Activated B cell treated with CpG ODN at 0.5 μM for 24 hours (primary cell): ENCODE measurements at regions of chr1 and their contacts with region 1.

Region 1: GRCh38 chr1:243325305-243325890 is 69.6 kb downstream of the SDCCAG8 start:
- DNase-seq: no peak
- ATAC-seq: peak; percentile 40
- H3K4me3 Mint-ChIP-seq: no peak overlapping the region
- H3K27ac Mint-ChIP-seq: no peak overlapping the region
- H3K4me1 Mint-ChIP-seq: no peaks in the 10 kb centered on the region
- H3K27me3 Mint-ChIP-seq: no peaks in the 10 kb centered on the region
- CTCF ChIP-seq: peak; percentile 84

Region 2: DNA sequence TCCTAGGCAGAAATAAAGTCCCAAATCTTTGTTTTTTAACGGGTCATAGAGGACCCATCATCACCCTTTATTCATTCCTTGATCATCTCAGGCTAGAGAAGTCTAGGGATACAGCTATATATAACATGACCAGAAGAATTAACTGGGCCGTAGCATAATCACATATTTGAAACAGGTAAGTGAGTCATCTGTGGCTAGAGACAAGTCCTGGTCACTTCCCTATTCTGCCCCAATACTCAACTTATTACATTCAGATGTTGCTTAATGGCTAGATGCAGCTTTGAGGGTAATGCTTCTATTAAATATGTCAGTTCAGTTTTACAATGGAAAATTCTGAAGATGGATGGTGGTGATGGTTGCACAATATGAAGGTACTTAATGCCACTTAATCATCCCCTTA is 1430.4 kb before region 1 on chr1:
- CTCF ChIA-PET with region 1: no interaction called
- POLR2A ChIA-PET with region 1: no interaction called
- intact Hi-C with region 1: loop called (anchors 5 kb)
- DNase-seq: no peak
- ATAC-seq: no peak
- H3K4me3 Mint-ChIP-seq: no peak overlapping the region
- H3K27ac Mint-ChIP-seq: no peak overlapping the region
- H3K4me1 Mint-ChIP-seq: peaks cover 15% of the 10 kb centered on the region
- H3K27me3 Mint-ChIP-seq: no peaks in the 10 kb centered on the region
- CTCF ChIP-seq: no peak

Region 3: GRCh38 chr1:242017584-242018233 is 1307.7 kb before region 1 on chr1:
- CTCF ChIA-PET with region 1: no interaction called
- POLR2A ChIA-PET with region 1: no interaction called
- intact Hi-C with region 1: loop called (anchors 10 kb)
- DNase-seq: no peak
- ATAC-seq: peak; percentile 77
- H3K4me3 Mint-ChIP-seq: no peak overlapping the region
- H3K27ac Mint-ChIP-seq: no peak overlapping the region
- H3K4me1 Mint-ChIP-seq: no peaks in the 10 kb centered on the region
- H3K27me3 Mint-ChIP-seq: no peaks in the 10 kb centered on the region
- CTCF ChIP-seq: no peak

Region 4: GRCh38 chr1:242454262-242455045 is 870.9 kb before region 1 on chr1:
- CTCF ChIA-PET with region 1: interaction called, 7 read pairs
- POLR2A ChIA-PET with region 1: no interaction called
- intact Hi-C with region 1: loop called (anchors 1 kb)
- DNase-seq: no peak
- ATAC-seq: no peak
- H3K4me3 Mint-ChIP-seq: no peak overlapping the region
- H3K27ac Mint-ChIP-seq: no peak overlapping the region
- H3K4me1 Mint-ChIP-seq: peaks cover 2% of the 10 kb centered on the region
- H3K27me3 Mint-ChIP-seq: peaks cover 10% of the 10 kb centered on the region
- CTCF ChIP-seq: no peak

Region 5: DNA sequence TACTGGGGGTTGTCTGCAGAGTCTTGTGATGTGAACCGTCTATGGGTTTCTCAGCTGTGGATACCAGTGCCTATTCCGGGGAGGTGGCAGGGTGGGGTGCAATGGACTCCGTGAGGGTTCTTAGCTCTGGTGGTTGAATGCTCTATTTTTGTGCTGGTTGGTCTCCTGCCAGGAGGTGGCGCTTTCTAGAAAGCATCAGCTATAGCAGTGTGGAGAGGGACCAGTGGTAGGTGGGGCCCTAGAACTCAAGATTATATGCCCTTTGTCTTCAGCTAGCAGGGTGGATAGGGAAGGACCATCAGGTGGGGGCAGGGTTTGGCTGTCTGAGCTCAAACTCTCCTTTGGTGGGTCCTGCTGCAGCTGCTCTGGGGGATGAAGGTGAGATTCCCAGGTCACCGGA is 673.6 kb before region 1 on chr1:
- CTCF ChIA-PET with region 1: no interaction called
- POLR2A ChIA-PET with region 1: no interaction called
- intact Hi-C with region 1: loop called (anchors 2 kb)
- DNase-seq: no peak
- ATAC-seq: no peak
- H3K4me3 Mint-ChIP-seq: no peak overlapping the region
- H3K27ac Mint-ChIP-seq: no peak overlapping the region
- H3K4me1 Mint-ChIP-seq: no peaks in the 10 kb centered on the region
- H3K27me3 Mint-ChIP-seq: peaks cover 4% of the 10 kb centered on the region
- CTCF ChIP-seq: no peak

Region 6: DNA sequence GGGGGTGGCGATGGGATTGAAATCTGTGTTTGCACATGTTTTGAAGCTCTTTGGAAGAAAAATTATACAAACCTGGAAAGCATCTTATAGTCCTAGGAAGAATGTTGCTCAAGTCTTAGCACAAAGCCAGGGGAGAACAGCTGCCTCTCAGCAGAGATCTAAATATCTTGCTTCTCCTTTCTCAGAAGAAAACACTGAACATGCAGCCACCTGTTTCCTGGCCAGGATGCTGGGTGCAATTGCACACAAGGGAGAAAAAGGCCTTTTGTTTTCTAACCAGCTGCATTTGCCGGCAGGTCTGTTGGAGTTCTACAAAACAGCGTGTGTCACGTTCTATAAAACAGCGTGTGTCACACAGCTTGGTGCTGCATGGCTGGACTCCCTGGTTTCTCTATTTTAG is 541.3 kb before region 1 on chr1:
- CTCF ChIA-PET with region 1: no interaction called
- POLR2A ChIA-PET with region 1: no interaction called
- intact Hi-C with region 1: loop called (anchors 10 kb)
- DNase-seq: no peak
- ATAC-seq: peak; percentile 80
- H3K4me3 Mint-ChIP-seq: peak overlapping the region; percentile 61
- H3K27ac Mint-ChIP-seq: peak overlapping the region; percentile 94
- H3K4me1 Mint-ChIP-seq: peaks cover 66% of the 10 kb centered on the region
- H3K27me3 Mint-ChIP-seq: no peaks in the 10 kb centered on the region
- CTCF ChIP-seq: no peak

Region 7: DNA sequence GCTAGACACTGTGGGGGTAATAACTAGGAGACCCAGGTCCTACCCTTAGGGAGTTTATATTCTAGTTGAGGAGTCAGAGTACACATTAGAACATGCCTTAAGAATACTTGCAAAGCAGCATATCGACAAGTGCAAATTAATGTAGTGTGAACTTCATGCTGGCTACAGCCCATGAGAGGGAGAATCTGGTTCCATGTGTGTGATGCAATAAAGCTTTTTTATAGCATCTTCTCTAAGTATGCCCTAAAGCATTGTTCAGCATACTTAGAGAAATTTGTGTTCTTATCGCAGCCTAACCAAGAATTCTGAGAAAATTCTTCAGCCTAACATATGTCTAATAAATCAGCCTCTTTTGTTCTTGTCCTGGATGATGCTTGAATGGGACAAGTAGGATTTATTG is 25.9 kb after region 1 on chr1:
- CTCF ChIA-PET with region 1: no interaction called
- POLR2A ChIA-PET with region 1: no interaction called
- intact Hi-C with region 1: no loop called
- DNase-seq: no peak
- ATAC-seq: no peak
- H3K4me3 Mint-ChIP-seq: no peak overlapping the region
- H3K27ac Mint-ChIP-seq: no peak overlapping the region
- H3K4me1 Mint-ChIP-seq: peaks cover 15% of the 10 kb centered on the region
- H3K27me3 Mint-ChIP-seq: no peaks in the 10 kb centered on the region
- CTCF ChIP-seq: no peak